ENCODE measurements at regions of chr5 and their contacts with region 1.

Region 1: DNA sequence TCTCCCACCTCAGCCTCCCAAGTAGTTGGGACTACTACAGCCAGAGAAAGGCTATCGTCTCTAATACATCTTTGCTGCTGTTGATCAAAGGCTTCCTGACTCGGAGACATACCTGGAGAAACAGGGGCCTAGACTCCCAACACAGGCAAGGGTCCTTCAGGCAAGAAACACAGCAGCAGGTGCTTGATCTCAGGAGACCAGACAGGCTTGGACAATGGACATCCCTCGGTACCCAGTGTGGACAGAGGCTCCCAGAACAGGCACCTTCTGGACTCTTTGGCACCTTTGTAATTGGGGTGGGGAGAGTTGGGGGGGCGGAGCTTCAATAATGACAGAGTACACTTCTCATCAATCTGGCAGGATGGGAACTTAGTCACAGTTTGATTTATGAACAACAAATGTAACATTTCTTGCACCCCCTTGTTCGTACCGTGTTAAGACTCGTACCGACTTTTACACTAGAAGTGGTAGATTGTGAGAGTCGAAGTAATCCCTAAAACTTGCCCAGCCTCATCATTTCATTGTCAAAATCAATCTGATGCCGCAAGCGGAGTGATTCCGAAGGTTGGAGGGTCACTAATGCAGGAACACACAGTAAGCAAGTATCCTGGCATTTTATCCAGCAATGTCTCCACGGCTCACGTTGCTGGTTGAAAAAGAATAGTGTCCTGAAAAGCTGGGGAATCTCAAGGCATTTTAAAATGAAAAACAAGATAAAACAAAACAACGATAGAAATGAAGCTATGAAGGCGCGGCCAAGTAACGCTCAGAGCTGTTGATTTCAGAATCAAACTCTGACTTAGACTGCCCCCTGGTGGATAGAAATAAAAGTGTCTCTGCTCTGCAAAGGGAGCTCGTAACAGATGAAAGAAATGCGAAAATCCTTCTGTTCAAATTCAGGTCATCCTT is 46.4 kb upstream of the STK32A start:
- DNase-seq: peak in 1 of 2 experiments; percentile 50
- H3K4me3 ChIP-seq: no peak overlapping the region
- H3K27ac ChIP-seq: no peak overlapping the region
- H3K4me1 ChIP-seq: peaks cover 0 to 15% (median 5%) of the 10 kb centered on the region in 4 experiments; a peak in 3 of 7 replicates
- H3K27me3 ChIP-seq: no peaks in the 10 kb centered on the region
- CTCF ChIP-seq: peak in 2 of 3 experiments; percentile 66 to 80; a peak in 3 of 4 replicates
- EP300 ChIP-seq: no peak
- POLR2A ChIP-seq: no peak
- RAD21 ChIP-seq: peak; percentile 88 to 94

Region 2: DNA sequence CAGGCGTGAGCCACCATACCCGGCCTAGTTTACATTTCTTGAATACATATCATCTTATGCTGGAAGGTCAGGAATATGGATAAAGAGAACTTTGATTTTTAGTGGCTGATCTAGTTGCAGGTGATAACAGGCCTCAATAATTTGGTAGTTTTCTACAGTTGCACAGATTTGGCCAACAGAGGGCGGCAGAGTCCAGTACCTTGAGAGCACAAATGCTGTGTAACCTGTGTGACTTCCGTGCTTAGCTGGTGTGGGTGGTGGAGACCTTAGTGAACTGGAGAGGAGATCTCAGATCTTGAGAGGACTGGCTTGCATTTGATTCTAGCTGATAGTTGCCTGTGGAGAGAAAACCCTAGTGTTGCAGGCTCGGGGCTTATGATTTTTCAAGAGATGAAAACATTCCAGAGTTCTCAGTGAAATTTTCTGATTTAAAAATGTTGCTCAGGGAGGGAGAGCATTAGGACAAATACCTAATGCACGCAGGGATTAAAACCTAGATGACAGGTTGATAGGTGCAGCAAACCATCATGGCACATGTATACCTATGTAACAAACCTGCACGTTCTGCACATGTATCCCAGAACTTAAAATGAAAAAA is 655.1 kb before region 1 on chr5:
- CTCF ChIA-PET with region 1: interaction called, 53 read pairs
- POLR2A ChIA-PET with region 1: interaction called, 3 read pairs
- DNase-seq: peak; percentile 60 to 84
- H3K4me3 ChIP-seq: no peak overlapping the region
- H3K27ac ChIP-seq: no peak overlapping the region
- H3K4me1 ChIP-seq: peaks cover 0 to 7% (median 3%) of the 10 kb centered on the region in 4 experiments; a peak in 4 of 7 replicates
- H3K27me3 ChIP-seq: no peaks in the 10 kb centered on the region
- CTCF ChIP-seq: peak; percentile 61 to 92 (median 82)
- EP300 ChIP-seq: no peak
- POLR2A ChIP-seq: no peak
- RAD21 ChIP-seq: peak; percentile 92 to 93

Region 3: GRCh38 chr5:146541958-146542849 is 646.2 kb before region 1 on chr5:
- CTCF ChIA-PET with region 1: interaction called, 16 read pairs
- POLR2A ChIA-PET with region 1: no interaction called
- DNase-seq: peak; percentile 61 to 93
- H3K4me3 ChIP-seq: no peak overlapping the region
- H3K27ac ChIP-seq: no peak overlapping the region
- H3K4me1 ChIP-seq: peaks cover 0 to 3% (median 0%) of the 10 kb centered on the region in 4 experiments; a peak in 1 of 7 replicates
- H3K27me3 ChIP-seq: no peaks in the 10 kb centered on the region
- CTCF ChIP-seq: peak; percentile 89 to 100 (median 94)
- EP300 ChIP-seq: no peak
- POLR2A ChIP-seq: no peak
- RAD21 ChIP-seq: peak; percentile 99

Region 4: GRCh38 chr5:147203213-147203612 is 14.8 kb after region 1 on chr5:
- CTCF ChIA-PET with region 1: interaction called, 17 read pairs
- POLR2A ChIA-PET with region 1: no interaction called
- DNase-seq: no peak
- H3K4me3 ChIP-seq: no peak overlapping the region
- H3K27ac ChIP-seq: no peak overlapping the region
- H3K4me1 ChIP-seq: no peaks in the 10 kb centered on the region
- H3K27me3 ChIP-seq: no peaks in the 10 kb centered on the region
- CTCF ChIP-seq: no peak
- EP300 ChIP-seq: no peak
- POLR2A ChIP-seq: no peak
- RAD21 ChIP-seq: no peak

Region 5: GRCh38 chr5:147306351-147306750 is 117.9 kb after region 1 on chr5:
- CTCF ChIA-PET with region 1: no interaction called
- POLR2A ChIA-PET with region 1: no interaction called
- DNase-seq: no peak
- H3K4me3 ChIP-seq: no peak overlapping the region
- H3K27ac ChIP-seq: no peak overlapping the region
- H3K4me1 ChIP-seq: 0 out of 7 replicates have a peak, but pooled peaks cover 0 to 1% (median 0%) of the 10 kb centered on the region in 4 experiments
- H3K27me3 ChIP-seq: no peaks in the 10 kb centered on the region
- CTCF ChIP-seq: no peak
- EP300 ChIP-seq: no peak
- POLR2A ChIP-seq: no peak
- RAD21 ChIP-seq: no peak

Measured in H1 (cell line).